ENCODE measurements at regions of chr1 and their contacts with region 1.

Region 1: GRCh38 chr1:230772457-230773395 is 25.5 kb downstream of the CAPN9 start:
- DNase-seq: peak; percentile 41
- H3K4me3 ChIP-seq: no peak overlapping the region
- H3K27ac ChIP-seq: no peak overlapping the region
- H3K4me1 ChIP-seq: no peaks in the 10 kb centered on the region
- H3K27me3 ChIP-seq: no peaks in the 10 kb centered on the region
- CTCF ChIP-seq: peak; percentile 51

Region 2: DNA sequence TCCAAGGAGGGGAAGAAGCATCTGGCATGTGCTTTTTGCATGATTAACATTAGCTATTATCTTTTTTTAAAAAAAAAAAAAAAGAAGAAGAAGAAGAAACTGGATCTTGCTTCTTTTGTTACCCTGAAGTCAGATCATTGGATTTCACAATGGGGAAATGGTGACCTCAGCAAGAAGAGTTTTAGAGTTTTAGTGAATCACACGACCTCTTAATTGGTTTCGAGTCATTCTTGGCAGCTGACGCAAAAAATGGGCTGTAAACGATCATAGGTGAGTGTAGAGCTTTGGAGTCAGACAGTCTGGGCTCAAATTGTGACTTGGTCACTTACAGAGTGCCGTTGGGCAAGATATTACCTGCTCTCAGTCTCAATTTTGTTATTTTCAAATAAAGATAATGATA is 313.3 kb before region 1 on chr1:
- intact Hi-C with region 1: no loop called
- DNase-seq: no peak
- H3K4me3 ChIP-seq: no peak overlapping the region
- H3K27ac ChIP-seq: no peak overlapping the region
- H3K4me1 ChIP-seq: no peaks in the 10 kb centered on the region
- H3K27me3 ChIP-seq: no peaks in the 10 kb centered on the region
- CTCF ChIP-seq: no peak

Region 3: DNA sequence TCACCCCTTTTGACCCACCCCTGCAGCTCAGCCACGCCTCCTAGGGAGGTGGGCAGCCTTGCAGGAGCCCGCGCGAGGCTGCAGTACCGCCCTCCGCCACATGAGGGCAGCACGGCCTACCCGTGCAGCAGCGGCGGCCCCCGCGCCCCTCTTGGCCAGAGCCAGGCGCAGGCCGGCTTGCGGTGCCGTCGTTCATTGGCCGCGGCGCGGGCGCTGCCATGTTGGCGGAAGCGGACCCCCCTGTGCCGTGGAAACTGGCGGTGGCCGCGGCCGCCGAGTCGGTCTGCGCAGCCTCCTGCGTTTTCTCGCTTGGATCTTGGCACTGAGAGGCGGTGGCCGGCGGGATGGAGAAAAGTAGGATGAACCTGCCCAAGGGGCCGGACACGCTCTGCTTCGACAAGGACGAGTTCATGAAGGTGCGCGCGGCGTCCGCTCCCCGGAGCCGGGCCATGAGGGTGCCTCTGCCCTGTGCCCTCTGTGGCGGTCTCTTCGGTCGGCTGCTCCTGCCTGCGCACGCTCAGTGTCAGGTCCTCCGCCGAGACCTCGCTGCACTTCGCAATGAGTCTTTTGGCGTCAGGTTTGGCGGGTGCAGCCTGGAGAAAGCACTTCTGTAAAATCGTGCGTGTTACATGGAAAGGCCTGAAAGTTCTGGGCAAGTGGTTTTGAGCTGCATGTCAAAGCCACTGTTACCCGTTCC is 130.3 kb before region 1 on chr1 and contains the start of gene COG2:
- intact Hi-C with region 1: loop called (anchors 5 kb)
- DNase-seq: peak; percentile 95
- H3K4me3 ChIP-seq: peak within 1 kb of the TSS; percentile 86
- H3K27ac ChIP-seq: peak within 1 kb of the TSS; percentile 87
- H3K4me1 ChIP-seq: peaks cover 10% of the 10 kb centered on the region
- H3K27me3 ChIP-seq: no peaks in the 10 kb centered on the region
- CTCF ChIP-seq: peak; percentile 100
- total RNA-seq, gene COG2: 42.0 to 53.8 TPM

Region 4: DNA sequence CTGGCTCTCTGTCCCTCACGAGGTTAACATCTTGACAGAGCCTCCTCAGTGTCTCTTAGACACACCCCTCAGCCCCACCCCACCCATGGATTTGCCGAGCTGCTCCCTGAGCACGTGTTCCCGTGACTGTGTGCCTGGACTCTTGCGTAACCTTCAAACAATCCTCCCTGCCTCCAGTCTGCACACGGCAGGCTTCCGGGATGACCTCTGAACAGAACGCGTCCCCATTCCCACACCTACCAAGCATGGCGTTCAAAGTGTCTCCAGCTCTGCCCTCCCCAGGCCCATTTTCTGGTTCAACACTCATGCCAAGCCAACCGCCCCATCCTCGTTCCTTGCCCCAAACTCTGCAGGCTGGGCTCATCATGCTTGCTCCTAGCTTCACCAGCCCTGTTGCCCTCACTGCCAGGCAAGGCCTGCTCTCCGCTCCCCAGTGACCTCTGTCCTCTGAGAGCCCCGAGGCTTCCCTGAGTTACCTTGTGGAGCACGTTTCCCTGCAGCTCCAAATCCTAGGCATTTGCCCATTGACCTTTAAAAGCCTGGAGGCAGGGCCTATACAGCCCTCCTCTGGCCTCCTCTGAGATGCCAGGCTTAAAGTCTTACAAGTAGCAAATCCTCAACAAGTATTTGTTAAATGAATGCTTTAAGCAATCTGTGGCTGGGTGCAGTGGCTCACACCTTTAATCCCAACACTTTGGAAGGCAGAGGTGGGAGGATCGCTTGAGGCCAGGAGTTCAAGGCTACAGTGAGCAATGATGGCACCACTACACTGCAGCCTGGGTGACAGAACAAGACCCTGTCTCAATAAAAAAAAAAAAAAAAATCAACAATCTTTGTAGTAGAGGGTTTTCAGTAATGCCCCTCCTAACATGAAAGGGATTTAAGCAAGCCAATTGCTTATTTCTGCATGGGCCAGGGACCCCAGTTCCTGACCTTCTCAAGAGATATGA is 63.8 kb before region 1 on chr1:
- intact Hi-C with region 1: loop called (anchors 10 kb)
- DNase-seq: peak; percentile 93
- H3K4me3 ChIP-seq: no peak overlapping the region
- H3K27ac ChIP-seq: no peak overlapping the region
- H3K4me1 ChIP-seq: peaks cover 3% of the 10 kb centered on the region
- H3K27me3 ChIP-seq: no peaks in the 10 kb centered on the region
- CTCF ChIP-seq: no peak

Region 5: GRCh38 chr1:230728710-230729392 is 43.9 kb before region 1 on chr1:
- intact Hi-C with region 1: no loop called
- DNase-seq: peak; percentile 68
- H3K4me3 ChIP-seq: no peak overlapping the region
- H3K27ac ChIP-seq: no peak overlapping the region
- H3K4me1 ChIP-seq: peaks cover 7% of the 10 kb centered on the region
- H3K27me3 ChIP-seq: no peaks in the 10 kb centered on the region
- CTCF ChIP-seq: no peak